Spleen (tissue), 13 donors: ENCODE measurements at regions of chr20 and their contacts with region 1.

Region 1: GRCh38 chr20:48523212-48523941 is 304.4 kb downstream of the PREX1 start:
- DNase-seq: no peak
- H3K4me3 ChIP-seq: no peak overlapping the region
- H3K27ac ChIP-seq: no peak overlapping the region
- H3K4me1 ChIP-seq: no peaks in the 10 kb centered on the region
- H3K27me3 ChIP-seq: peaks cover 0 to 22% (median 0%) of the 10 kb centered on the region in 7 donors
- CTCF ChIP-seq: no peak
- POLR2A ChIP-seq: no peak

Region 2: GRCh38 chr20:47886460-47887041 is 636.8 kb before region 1 on chr20:
- intact Hi-C with region 1: loop called (anchors 5 kb)
- DNase-seq: no peak
- H3K4me3 ChIP-seq: no peak overlapping the region
- H3K27ac ChIP-seq: no peak overlapping the region
- H3K4me1 ChIP-seq: no peaks in the 10 kb centered on the region
- H3K27me3 ChIP-seq: peaks cover 0 to 22% (median 0%) of the 10 kb centered on the region in 7 donors
- CTCF ChIP-seq: no peak
- POLR2A ChIP-seq: no peak